Endothelial cell of umbilical vein (primary cell): ENCODE measurements at regions of chr2 and their contacts with region 1.

Region 1: GRCh38 chr2:24015562-24016346 is 5.9 kb downstream of the MFSD2B start:
- DNase-seq: peak; percentile 81
- H3K4me3 ChIP-seq: no peak overlapping the region
- H3K27ac ChIP-seq: peak overlapping the region; percentile 94
- H3K4me1 ChIP-seq: peaks cover 24% of the 10 kb centered on the region
- H3K27me3 ChIP-seq: no peaks in the 10 kb centered on the region
- CTCF ChIP-seq: no peak
- POLR2A ChIP-seq: peak; percentile 16

Region 2: GRCh38 chr2:24075915-24076848 is 60.4 kb after region 1 on chr2 and contains the start of gene SF3B6:
- CTCF ChIA-PET with region 1: no interaction called
- POLR2A ChIA-PET with region 1: no interaction called
- dilution Hi-C with region 1: no loop called
- intact Hi-C with region 1: loop called (anchors 2 kb)
- DNase-seq: peak; percentile 98
- H3K4me3 ChIP-seq: peak within 1 kb of the TSS; percentile 79 to 92 (median 87)
- H3K27ac ChIP-seq: peak within 1 kb of the TSS; percentile 18
- H3K4me1 ChIP-seq: peaks cover 12% of the 10 kb centered on the region
- H3K27me3 ChIP-seq: no peaks in the 10 kb centered on the region
- CTCF ChIP-seq: no peak
- POLR2A ChIP-seq: peak; percentile 79
- total RNA-seq, gene SF3B6: 105 and 108 TPM in 2 replicates